AG04449 (cell line): ENCODE measurements at regions of chr15 and their contacts with region 1.

Region 1: DNA sequence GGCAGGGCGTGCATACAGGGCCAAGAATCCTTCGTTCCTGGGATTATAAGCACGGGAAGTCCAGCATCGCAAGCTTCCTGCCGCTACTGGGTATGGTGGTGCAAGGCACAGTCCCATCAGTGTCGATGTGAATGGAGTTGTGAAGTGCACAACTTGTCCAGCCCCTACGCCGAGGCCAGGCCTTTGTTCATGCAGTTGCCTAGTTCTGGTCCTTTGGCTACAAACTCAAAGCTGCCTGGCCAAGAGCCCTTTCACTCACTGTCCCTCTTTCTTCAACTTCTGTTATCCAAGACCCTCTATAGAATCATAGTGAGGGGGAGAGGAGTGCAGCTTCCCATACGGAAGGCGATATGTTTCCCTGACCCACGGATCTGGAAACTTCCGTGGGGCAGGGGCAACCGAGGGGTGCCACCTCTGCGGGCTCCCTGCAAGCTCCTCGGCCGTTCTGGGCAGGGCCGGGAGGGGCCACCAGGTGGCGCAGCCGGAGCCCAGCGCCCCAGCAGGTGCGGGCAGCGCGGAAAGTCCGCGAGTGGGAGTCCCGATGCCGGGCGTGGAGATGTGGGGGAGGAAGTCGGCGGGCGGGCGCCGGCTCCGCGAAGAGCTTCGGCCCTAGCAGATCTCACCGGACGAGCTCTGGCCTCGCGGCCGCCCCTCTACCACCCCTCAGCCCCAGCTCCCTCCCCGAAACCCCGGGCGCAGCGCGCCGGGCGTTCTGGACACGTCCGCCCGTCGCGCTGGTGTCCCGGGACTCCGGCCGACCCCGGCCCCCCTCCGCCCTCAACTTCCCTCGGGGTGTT is 693 bp downstream of the RASGRP1 start:
- DNase-seq: no peak
- H3K4me3 ChIP-seq: peak overlapping the region; percentile 64
- CTCF ChIP-seq: peak; percentile 97

Region 2: GRCh38 chr15:38050529-38051448 is 513.1 kb before region 1 on chr15:
- CTCF ChIA-PET with region 1: no interaction called
- POLR2A ChIA-PET with region 1: no interaction called
- DNase-seq: no peak
- H3K4me3 ChIP-seq: no peak overlapping the region
- CTCF ChIP-seq: no peak

Region 3: DNA sequence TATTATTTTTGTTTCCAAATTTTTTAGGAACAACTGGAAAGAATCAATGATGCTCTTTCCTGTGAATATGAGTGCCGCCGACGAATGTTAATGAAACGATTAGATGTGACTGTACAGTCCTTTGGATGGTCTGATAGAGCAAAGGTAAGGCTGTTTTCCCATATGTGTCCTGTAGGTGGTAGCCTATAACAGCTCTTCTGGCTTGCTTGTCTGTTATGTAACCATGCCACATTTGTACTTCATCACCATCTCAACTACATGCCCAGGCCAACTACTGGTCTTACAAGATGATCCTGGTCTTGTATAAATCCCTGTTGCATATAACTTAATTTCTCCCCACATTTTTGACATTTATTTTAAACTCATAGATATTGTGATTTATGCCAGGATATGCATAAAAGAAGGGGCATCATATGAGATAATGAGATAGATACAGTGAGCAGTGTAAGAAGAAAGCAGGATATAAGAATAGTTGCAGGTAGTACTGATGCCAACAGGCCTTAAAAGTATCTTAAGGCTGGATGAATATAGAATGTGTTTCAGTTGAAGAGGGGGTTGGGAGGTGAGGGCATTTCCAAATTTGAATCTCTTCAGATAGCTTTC is 89.7 kb before region 1 on chr15:
- CTCF ChIA-PET with region 1: interaction called, 67 read pairs
- POLR2A ChIA-PET with region 1: no interaction called
- DNase-seq: peak; percentile 67
- H3K4me3 ChIP-seq: no peak overlapping the region
- CTCF ChIP-seq: peak; percentile 77

Region 4: GRCh38 chr15:38547255-38547997 is 16.5 kb before region 1 on chr15:
- CTCF ChIA-PET with region 1: interaction called, 58 read pairs
- POLR2A ChIA-PET with region 1: no interaction called
- DNase-seq: no peak
- H3K4me3 ChIP-seq: no peak overlapping the region
- CTCF ChIP-seq: no peak

Region 5: GRCh38 chr15:38602901-38603670 is 39.2 kb after region 1 on chr15:
- CTCF ChIA-PET with region 1: interaction called, 11 read pairs
- POLR2A ChIA-PET with region 1: no interaction called
- DNase-seq: no peak
- H3K4me3 ChIP-seq: no peak overlapping the region
- CTCF ChIP-seq: no peak

Region 6: DNA sequence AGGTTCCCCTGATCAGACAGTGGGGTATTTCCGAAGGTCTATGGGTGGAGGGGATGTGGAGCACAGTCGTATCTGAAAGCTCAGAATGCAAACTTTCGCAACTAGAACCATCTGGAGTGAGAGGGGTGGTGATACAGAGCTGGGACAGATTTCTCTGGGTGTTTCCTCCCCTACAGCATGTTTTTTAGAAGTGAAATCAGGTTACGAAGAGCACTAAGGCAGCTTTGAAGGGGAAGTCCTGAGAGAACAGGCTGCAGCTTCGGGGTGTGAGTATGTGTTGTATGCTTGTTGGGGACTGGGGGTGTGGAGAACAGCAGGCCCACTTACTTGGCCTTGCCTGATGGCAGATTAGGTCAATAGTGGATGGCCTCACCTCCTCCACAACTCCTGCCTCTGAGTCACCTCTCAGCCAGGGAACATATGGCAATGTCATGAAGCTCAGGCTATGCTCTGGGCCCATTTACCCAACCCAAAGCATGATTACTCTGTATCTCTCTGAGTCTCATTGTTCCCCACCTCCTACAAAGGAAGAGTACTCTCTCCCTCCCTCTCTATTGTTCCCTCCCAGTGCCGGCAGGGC is 107.8 kb after region 1 on chr15:
- CTCF ChIA-PET with region 1: interaction called, 10 read pairs
- POLR2A ChIA-PET with region 1: no interaction called
- DNase-seq: no peak
- H3K4me3 ChIP-seq: no peak overlapping the region
- CTCF ChIP-seq: no peak

Region 7: GRCh38 chr15:38699633-38700230 is 135.8 kb after region 1 on chr15:
- CTCF ChIA-PET with region 1: interaction called, 16 read pairs
- POLR2A ChIA-PET with region 1: no interaction called
- DNase-seq: no peak
- H3K4me3 ChIP-seq: no peak overlapping the region
- CTCF ChIP-seq: peak; percentile 79